Mammary epithelial cell (primary cell): ENCODE measurements at regions of chr14 and their contacts with region 1.

Region 1: GRCh38 chr14:66403183-66403582 is 83.0 kb upstream of the CCDC196 start:
- DNase-seq: peak; percentile 50
- H3K4me3 ChIP-seq: no peak overlapping the region
- H3K27ac ChIP-seq: no peak overlapping the region
- H3K4me1 ChIP-seq: no peaks in the 10 kb centered on the region
- H3K27me3 ChIP-seq: no peaks in the 10 kb centered on the region
- CTCF ChIP-seq: peak; percentile 48 to 72

Region 2: DNA sequence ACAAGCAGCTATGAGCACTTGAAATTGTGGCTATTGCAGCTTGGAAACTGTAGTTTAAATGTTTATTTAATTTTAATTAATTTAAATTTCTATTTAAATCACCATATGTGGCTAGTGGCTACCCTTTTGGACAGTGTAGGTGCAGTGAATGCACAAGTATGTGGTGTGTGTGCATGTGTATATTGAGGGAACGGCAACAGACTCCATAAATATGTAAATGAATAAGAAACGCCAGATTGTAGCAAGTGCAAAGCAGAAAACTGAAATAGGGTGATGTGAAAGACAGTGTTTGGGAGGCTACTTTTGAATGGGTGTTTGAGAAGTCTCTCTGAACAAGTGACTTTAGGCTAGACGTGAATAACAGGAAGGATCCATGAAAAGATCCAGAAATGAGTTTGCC is 50.3 kb after region 1 on chr14:
- CTCF ChIA-PET with region 1: no interaction called
- dilution Hi-C with region 1: loop called (anchors 5 kb)
- in situ Hi-C with region 1: no loop called
- intact Hi-C with region 1: no loop called
- DNase-seq: no peak
- H3K4me3 ChIP-seq: no peak overlapping the region
- H3K27ac ChIP-seq: no peak overlapping the region
- H3K4me1 ChIP-seq: no peaks in the 10 kb centered on the region
- H3K27me3 ChIP-seq: peaks cover 2% of the 10 kb centered on the region
- CTCF ChIP-seq: no peak

Region 3: GRCh38 chr14:66476964-66477363 is 73.8 kb after region 1 on chr14:
- CTCF ChIA-PET with region 1: no interaction called
- dilution Hi-C with region 1: no loop called
- in situ Hi-C with region 1: no loop called
- intact Hi-C with region 1: no loop called
- DNase-seq: peak; percentile 35
- H3K4me3 ChIP-seq: no peak overlapping the region
- H3K27ac ChIP-seq: no peak overlapping the region
- H3K4me1 ChIP-seq: no peaks in the 10 kb centered on the region
- H3K27me3 ChIP-seq: no peaks in the 10 kb centered on the region
- CTCF ChIP-seq: no peak

Region 4: GRCh38 chr14:66638689-66639088 is 235.5 kb after region 1 on chr14:
- CTCF ChIA-PET with region 1: no interaction called
- dilution Hi-C with region 1: no loop called
- in situ Hi-C with region 1: no loop called
- intact Hi-C with region 1: no loop called
- DNase-seq: peak; percentile 52
- H3K4me3 ChIP-seq: no peak overlapping the region
- H3K27ac ChIP-seq: no peak overlapping the region
- H3K4me1 ChIP-seq: peaks cover 18% of the 10 kb centered on the region
- H3K27me3 ChIP-seq: no peaks in the 10 kb centered on the region
- CTCF ChIP-seq: no peak